Dorsolateral prefrontal cortex (tissue), 120 donors: ENCODE measurements at regions of chrX and their contacts with region 1.

Region 1: GRCh38 chrX:50747471-50747900 is 66.5 kb downstream of the SHROOM4 start:
- DNase-seq: no peak
- H3K4me3 ChIP-seq: no peak overlapping the region
- H3K27ac ChIP-seq: peak overlapping the region in 9 of 59 donors; percentile 16 to 76 (median 68)
- H3K27me3 ChIP-seq: peaks cover 0 to 81% (median 27%) of the 10 kb centered on the region in 45 donors
- CTCF ChIP-seq: peak in 55 of 56 donors; percentile 45 to 81 (median 63)

Region 2: DNA sequence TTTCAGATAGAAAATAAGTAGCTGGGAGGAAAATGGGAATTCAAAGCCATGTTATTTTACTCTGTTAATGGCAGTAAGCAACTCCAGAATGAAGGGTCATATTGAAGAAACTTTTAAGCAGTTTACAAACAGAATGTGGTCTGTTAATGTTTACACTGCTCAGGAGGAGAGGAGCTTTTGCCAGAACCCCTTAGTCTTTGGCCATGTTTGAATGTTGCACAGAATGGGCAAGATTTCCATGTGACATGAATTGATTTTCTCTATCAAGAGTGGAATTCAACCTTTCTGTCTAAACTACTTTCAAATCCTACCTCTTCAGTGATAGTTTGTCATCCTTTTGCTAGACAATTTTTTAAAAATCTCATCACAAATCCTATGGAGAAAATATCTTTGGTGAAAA is 161.1 kb before region 1 on chrX:
- intact Hi-C with region 1: no loop called
- DNase-seq: no peak
- H3K4me3 ChIP-seq: no peak overlapping the region
- H3K27ac ChIP-seq: no peak overlapping the region
- H3K27me3 ChIP-seq: peaks cover 0 to 60% (median 15%) of the 10 kb centered on the region in 45 donors
- CTCF ChIP-seq: no peak

Region 3: GRCh38 chrX:50877370-50877769 is 129.9 kb after region 1 on chrX:
- intact Hi-C with region 1: no loop called
- DNase-seq: peak in 1 of 10 donors; percentile 31
- H3K4me3 ChIP-seq: no peak overlapping the region
- H3K27ac ChIP-seq: no peak overlapping the region
- H3K27me3 ChIP-seq: peaks cover 0 to 77% (median 30%) of the 10 kb centered on the region in 45 donors
- CTCF ChIP-seq: no peak

Region 4: GRCh38 chrX:50905334-50905733 is 157.8 kb after region 1 on chrX:
- intact Hi-C with region 1: loop called (anchors 2 to 5 kb)
- DNase-seq: no peak
- H3K4me3 ChIP-seq: no peak overlapping the region
- H3K27ac ChIP-seq: no peak overlapping the region
- H3K27me3 ChIP-seq: peaks cover 0 to 91% (median 34%) of the 10 kb centered on the region in 45 donors
- CTCF ChIP-seq: peak in 10 of 56 donors; percentile 9 to 27 (median 20)